ENCODE measurements at regions of chr19 and their contacts with region 1.

Region 1: GRCh38 chr19:8663920-8664670 is 33.7 kb downstream of the NFILZ start:
- DNase-seq: peak in 2 of 3 donors; percentile 68 to 73
- H3K4me3 ChIP-seq: peak overlapping the region in 3 of 7 experiments; percentile 11 to 32 (median 20)
- H3K27ac ChIP-seq: no peak overlapping the region
- H3K4me1 ChIP-seq: peaks cover 3 to 44% (median 30%) of the 10 kb centered on the region in 4 experiments
- H3K27me3 ChIP-seq: no peaks in the 10 kb centered on the region

Region 2: GRCh38 chr19:8695501-8695900 is 31.4 kb after region 1 on chr19:
- CTCF ChIA-PET with region 1: interaction called, 117 read pairs
- POLR2A ChIA-PET with region 1: no interaction called
- DNase-seq: no peak
- H3K4me3 ChIP-seq: no peak overlapping the region
- H3K27ac ChIP-seq: no peak overlapping the region
- H3K4me1 ChIP-seq: peaks cover 0 to 9% (median 2%) of the 10 kb centered on the region in 4 experiments
- H3K27me3 ChIP-seq: peaks cover 0 to 3% (median 0%) of the 10 kb centered on the region in 5 experiments

Measured in common myeloid progenitor, CD34-positive (primary cell).